Activated T-helper 1 cell treated with anti-CD3 and anti-CD28 coated beads, Interleukin-12 subunit alpha, Interleukin-12 subunit beta, Interleukin-2, Interleukin-4 antibody, amounts not matched to agents 30 ng/mL and 10 ng/mL and 1 ng/mL, durations not matched to agents 14 hours and 24 hours and 36 hours (primary cell): ENCODE measurements at regions of chr11 and their contacts with region 1.

Region 1: DNA sequence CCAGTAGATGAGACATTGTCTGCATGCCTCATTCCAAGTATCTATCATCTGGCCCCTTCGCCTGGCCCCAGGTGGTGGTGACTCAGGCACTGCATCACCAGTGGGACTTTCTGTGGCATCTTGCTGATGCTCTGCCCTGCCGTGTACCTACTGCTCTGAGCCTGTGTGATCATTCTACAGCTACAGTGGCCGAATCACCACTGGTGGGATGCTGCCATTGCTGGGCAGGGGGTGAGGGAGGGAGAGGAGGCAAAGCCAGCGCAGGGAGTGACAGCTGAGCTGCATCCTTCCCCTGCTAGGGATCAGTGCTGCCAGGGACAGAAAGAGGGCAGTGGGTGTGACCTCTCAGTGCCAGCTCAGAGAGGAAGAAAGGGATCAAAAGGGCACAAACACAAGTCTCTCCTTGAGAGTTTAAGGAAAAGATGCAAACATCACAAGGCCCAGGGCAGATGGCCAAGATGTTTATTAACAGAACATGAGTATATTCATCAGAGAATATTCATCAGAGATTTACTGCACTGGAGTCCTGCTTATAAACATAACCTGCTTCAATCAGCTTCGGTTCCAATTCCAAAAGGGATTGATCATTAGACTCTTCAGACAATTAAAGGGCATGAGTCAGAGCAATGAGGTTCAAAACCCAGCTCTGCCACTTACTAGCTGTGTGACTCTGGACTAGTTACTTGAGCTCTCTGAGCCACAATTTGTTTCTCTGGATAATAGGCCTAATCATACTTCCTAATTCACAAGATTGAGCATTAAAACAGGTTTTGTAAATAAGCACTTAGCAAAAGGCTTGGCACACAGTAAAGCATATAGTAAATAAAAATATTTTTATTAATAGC is 109.8 kb downstream of the NAT10 start:
- DNase-seq: peak; percentile 19
- H3K4me3 Mint-ChIP-seq: peak overlapping the region; percentile 20
- H3K27ac Mint-ChIP-seq: peak overlapping the region; percentile 78
- H3K4me1 Mint-ChIP-seq: peaks cover 15% of the 10 kb centered on the region
- H3K27me3 Mint-ChIP-seq: peaks cover 13% of the 10 kb centered on the region

Region 2: GRCh38 chr11:33842236-33842915 is 372.8 kb before region 1 on chr11:
- intact Hi-C with region 1: no loop called
- DNase-seq: no peak
- H3K4me3 Mint-ChIP-seq: no peak overlapping the region
- H3K27ac Mint-ChIP-seq: no peak overlapping the region
- H3K4me1 Mint-ChIP-seq: no peaks in the 10 kb centered on the region
- H3K27me3 Mint-ChIP-seq: peaks cover 36% of the 10 kb centered on the region

Region 3: DNA sequence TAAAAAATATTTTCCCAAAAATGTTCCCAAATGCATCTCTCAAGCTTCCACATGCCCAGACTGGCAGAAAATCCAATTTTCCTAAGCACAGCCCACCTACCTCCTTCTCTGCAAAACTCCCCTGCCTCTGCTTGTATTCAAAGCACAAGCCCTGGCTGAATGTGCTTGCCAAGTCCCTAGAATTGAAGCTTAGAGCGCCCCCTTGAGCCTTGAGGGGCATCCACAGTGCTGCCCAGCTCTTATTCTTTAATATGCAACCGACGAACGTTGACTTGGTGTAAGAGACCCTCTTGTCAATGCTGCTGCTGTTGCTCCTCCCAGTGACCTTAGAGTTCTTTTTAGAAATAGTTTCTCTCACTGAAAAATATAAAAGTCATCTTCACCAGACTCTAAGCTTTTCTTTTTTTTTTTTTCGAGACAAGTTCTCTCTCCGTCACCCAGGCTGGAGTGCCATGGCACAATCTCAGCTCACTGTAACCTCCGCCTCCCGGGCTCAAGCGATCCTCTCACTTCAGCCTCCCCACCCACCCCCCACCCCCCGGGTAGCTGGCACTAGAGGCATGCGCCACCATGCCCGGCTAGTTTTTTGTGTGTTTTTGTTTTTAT is 227.1 kb before region 1 on chr11:
- intact Hi-C with region 1: no loop called
- DNase-seq: peak; percentile 63
- H3K4me3 Mint-ChIP-seq: no peak overlapping the region
- H3K27ac Mint-ChIP-seq: no peak overlapping the region
- H3K4me1 Mint-ChIP-seq: peaks cover 6% of the 10 kb centered on the region
- H3K27me3 Mint-ChIP-seq: peaks cover 3% of the 10 kb centered on the region

Region 4: DNA sequence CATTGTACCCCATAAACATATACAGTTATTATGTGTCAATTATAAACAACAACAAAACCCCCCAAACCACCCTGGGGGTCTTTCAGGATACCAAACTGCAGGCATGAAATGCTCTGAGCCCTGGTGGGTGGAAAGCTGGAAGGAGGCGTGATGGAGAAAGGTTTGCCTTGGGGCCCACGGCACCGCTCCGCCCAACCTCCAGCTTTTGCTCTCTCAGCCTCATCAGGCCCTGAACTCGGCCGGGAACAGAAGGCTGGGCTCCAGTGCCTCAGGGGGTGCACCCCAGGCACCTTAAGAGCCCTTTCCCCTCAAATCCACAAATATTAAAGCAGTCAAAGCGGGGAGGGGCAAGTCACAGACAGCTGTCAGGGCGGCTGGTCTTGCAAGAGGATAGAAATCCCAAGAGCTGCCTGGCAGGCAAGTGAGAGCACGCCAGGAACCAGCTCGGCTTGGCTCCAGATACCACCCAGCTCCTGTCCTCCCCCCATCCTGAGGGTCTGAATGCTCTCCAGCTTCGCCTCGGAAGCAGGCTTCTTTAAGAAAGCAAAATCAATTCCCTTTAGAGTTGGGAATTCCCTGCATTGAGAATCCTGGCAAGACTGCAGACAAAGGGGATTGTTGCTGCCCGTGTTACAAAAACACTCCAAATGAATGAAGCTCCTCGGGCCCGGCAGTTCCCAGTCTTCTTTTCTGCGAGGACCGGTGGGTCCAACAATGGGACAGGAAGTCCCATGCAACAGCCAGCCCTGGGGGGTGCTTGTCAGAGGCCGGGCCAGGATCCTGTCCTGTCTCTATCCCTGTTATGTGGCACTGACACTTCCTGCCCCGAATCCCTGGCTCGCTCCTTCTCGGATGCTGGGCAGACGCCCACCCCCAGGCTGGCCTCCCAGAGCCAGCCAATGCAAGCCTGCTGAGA is 29.0 kb before region 1 on chr11:
- intact Hi-C with region 1: no loop called
- DNase-seq: no peak
- H3K4me3 Mint-ChIP-seq: no peak overlapping the region
- H3K27ac Mint-ChIP-seq: no peak overlapping the region
- H3K4me1 Mint-ChIP-seq: peaks cover 18% of the 10 kb centered on the region
- H3K27me3 Mint-ChIP-seq: peaks cover 2% of the 10 kb centered on the region

Region 5: DNA sequence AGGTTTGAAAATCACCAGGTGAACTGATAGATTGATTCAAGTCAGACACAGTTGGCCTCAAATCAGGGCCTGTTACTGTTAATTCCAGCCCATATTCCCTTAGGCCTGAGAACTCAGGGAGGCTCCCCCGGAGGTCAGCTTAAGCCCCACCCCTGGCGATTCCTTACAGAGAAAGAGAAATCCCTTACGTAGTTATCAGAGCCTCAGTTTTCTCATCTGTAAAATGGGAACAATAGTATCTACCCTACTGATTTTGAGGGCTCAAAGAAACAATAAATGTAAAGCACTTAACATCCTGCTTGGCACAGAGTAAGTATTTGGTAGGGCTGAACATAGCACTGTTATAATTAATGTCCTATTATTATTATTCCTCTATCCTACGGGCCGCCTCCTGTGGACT is 15.7 kb before region 1 on chr11:
- intact Hi-C with region 1: loop called (anchors 1 kb)
- DNase-seq: no peak
- H3K4me3 Mint-ChIP-seq: no peak overlapping the region
- H3K27ac Mint-ChIP-seq: no peak overlapping the region
- H3K4me1 Mint-ChIP-seq: peaks cover 54% of the 10 kb centered on the region
- H3K27me3 Mint-ChIP-seq: peaks cover 7% of the 10 kb centered on the region